ENCODE measurements at regions of chr10 and their contacts with region 1.

Region 1: DNA sequence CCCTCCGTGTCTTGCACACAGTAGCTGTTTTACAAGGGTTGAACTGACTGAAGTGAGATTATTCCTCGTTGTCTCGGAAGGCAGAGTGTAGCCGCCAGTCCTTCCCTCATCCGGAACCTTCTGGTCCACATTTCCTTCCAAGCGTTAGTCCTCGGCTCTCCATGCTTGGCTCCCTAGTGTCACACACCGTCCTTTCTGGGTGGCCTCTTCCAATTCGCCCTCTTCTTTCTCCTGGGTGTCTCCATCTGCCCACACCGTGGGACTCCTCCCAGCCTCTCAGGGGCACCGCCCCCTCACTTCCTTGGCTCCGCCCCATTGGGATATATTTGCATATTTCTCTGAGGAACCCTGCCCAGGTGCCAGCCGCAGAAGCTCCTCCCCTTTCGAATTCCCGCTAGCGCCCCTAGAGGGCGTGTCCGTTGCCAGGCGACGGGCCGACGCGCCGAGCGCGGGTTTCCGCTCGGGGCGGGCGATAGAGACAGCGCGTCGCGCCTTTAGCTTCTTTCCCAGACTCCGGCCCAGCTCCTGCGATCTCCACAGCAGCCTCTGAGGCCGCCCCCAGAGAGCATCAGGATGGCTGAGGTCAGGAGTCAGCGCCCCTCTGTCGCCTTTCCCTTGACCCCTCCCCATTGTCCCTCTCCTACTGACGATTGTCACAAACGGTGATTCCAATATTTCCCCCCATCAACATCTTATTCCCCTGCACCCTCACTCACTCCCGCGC is at the start of gene CFAP58:
- DNase-seq: peak; percentile 95
- ATAC-seq: peak; percentile 87
- H3K4me3 ChIP-seq: peak within 1 kb of the TSS; percentile 46 to 66 (median 51)
- H3K4me3 Mint-ChIP-seq: peak within 1 kb of the TSS; percentile 52
- H3K27ac ChIP-seq: peak within 1 kb of the TSS; percentile 20 to 23
- H3K27ac Mint-ChIP-seq: peak within 1 kb of the TSS; percentile 64
- H3K4me1 ChIP-seq: peaks cover 32 to 43% of the 10 kb centered on the region in 2 donors
- H3K4me1 Mint-ChIP-seq: peaks cover 19% of the 10 kb centered on the region
- H3K27me3 ChIP-seq: peaks cover 0 to 5% (median 0%) of the 10 kb centered on the region in 4 experiments
- H3K27me3 Mint-ChIP-seq: no peaks in the 10 kb centered on the region
- CTCF ChIP-seq: peak; percentile 79
- total RNA-seq, gene CFAP58: not detected in 2 replicates

Region 2: DNA sequence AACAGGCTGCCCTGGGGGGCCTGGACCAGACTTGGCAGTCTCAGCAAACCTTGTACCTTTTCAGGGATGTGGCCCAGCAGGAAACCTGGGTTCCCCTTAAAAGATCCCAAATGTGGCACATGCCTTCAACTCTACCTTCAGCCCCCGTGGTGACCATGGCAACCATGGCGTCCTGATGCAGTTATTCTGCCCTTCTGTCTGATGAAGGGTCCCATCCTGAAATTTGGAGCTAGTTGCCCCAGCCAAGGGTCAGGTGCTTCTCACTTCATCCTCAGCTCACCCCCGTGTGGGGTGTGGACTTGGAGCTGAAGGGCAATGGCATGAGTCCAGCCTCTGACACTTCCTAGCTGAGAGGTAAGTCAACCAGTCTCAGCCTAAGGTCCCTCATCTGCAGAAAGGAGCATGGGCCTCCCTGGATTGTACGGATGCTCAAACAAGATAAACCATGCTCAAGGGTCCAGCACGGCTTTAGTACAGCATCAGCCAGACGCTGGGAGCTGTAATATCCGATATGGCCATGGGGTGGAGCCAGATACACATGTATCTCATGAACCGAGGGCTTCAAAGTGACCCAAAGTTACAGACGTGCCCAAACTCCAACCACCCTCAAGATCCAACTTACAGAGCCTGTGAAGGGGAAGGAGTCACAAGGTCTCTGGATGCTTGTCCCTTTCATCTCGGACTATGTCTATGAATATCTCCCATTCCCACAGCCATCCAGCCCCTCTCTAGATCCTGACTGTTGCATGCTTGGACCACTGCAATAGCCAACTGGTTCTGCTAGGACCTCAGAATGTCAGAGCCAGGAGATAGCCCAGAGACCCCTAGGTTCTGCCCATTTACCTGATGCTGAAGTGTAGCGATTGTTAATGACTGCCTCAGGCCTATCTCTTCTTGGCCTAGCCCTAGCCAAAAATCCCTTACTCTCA is 640.7 kb before region 1 on chr10:
- CTCF ChIA-PET with region 1: no interaction called
- POLR2A ChIA-PET with region 1: no interaction called
- intact Hi-C with region 1: loop called (anchors 5 kb)
- DNase-seq: peak; percentile 84
- ATAC-seq: peak; percentile 92
- H3K4me3 ChIP-seq: no peak overlapping the region
- H3K4me3 Mint-ChIP-seq: no peak overlapping the region
- H3K27ac ChIP-seq: no peak overlapping the region
- H3K27ac Mint-ChIP-seq: no peak overlapping the region
- H3K4me1 ChIP-seq: no peaks in the 10 kb centered on the region
- H3K4me1 Mint-ChIP-seq: no peaks in the 10 kb centered on the region
- H3K27me3 ChIP-seq: no peaks in the 10 kb centered on the region
- H3K27me3 Mint-ChIP-seq: peaks cover 6% of the 10 kb centered on the region
- CTCF ChIP-seq: peak; percentile 94

Region 3: GRCh38 chr10:104274762-104275721 is 78.4 kb before region 1 on chr10:
- CTCF ChIA-PET with region 1: interaction called, 64 read pairs
- POLR2A ChIA-PET with region 1: no interaction called
- intact Hi-C with region 1: no loop called
- DNase-seq: peak; percentile 64
- ATAC-seq: peak; percentile 71
- H3K4me3 ChIP-seq: no peak overlapping the region
- H3K4me3 Mint-ChIP-seq: no peak overlapping the region
- H3K27ac ChIP-seq: no peak overlapping the region
- H3K27ac Mint-ChIP-seq: no peak overlapping the region
- H3K4me1 ChIP-seq: peaks cover 8 to 9% of the 10 kb centered on the region in 2 donors
- H3K4me1 Mint-ChIP-seq: peaks cover 4% of the 10 kb centered on the region
- H3K27me3 ChIP-seq: peaks cover 0 to 23% (median 14%) of the 10 kb centered on the region in 4 experiments
- H3K27me3 Mint-ChIP-seq: peaks cover 23% of the 10 kb centered on the region
- CTCF ChIP-seq: peak; percentile 86

Region 4: DNA sequence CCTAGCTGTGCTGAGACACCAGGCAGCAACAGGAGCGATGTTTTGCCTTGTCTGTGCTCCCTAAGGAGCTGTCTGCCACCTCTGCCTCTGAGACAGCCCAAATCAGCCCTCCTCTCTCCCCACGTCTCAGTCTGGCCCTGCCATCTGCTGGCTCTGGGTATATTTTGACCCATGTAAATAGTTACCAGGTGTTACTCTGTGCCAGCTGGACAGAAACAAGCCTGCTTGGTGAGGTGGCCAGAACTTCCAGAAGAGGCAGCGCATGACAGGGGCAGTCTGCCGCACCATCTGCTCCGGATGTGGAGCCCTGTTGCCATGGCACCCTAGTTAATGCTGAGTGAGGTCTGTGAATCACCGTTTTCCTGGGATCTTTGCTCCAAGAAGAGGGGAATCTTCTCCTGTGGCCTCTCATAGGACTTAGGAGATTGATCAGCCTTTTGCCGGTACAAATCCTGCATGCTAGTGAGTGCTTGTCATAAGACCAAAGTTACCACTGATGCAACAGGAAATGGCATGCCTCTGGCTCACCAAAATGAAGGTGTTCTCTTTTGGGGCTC is 52.7 kb before region 1 on chr10:
- CTCF ChIA-PET with region 1: interaction called, 594 read pairs
- POLR2A ChIA-PET with region 1: interaction called, 8 read pairs
- intact Hi-C with region 1: loop called (anchors 1 kb)
- DNase-seq: no peak
- ATAC-seq: no peak
- H3K4me3 ChIP-seq: no peak overlapping the region
- H3K4me3 Mint-ChIP-seq: no peak overlapping the region
- H3K27ac ChIP-seq: no peak overlapping the region
- H3K27ac Mint-ChIP-seq: no peak overlapping the region
- H3K4me1 ChIP-seq: peaks cover 1 to 3% of the 10 kb centered on the region in 2 donors
- H3K4me1 Mint-ChIP-seq: peaks cover 3% of the 10 kb centered on the region
- H3K27me3 ChIP-seq: peaks cover 0 to 14% (median 0%) of the 10 kb centered on the region in 4 experiments
- H3K27me3 Mint-ChIP-seq: peaks cover 24% of the 10 kb centered on the region
- CTCF ChIP-seq: no peak

Region 5: GRCh38 chr10:104322416-104322782 is 31.1 kb before region 1 on chr10:
- CTCF ChIA-PET with region 1: interaction called, 594 read pairs
- POLR2A ChIA-PET with region 1: no interaction called
- intact Hi-C with region 1: no loop called
- DNase-seq: peak; percentile 41
- ATAC-seq: peak; percentile 48
- H3K4me3 ChIP-seq: peak overlapping the region in 1 of 5 experiments; percentile 30
- H3K4me3 Mint-ChIP-seq: peak overlapping the region; percentile 58
- H3K27ac ChIP-seq: peak overlapping the region; percentile 46 to 67
- H3K27ac Mint-ChIP-seq: peak overlapping the region; percentile 80
- H3K4me1 ChIP-seq: peaks cover 94 to 98% of the 10 kb centered on the region in 2 donors
- H3K4me1 Mint-ChIP-seq: peaks cover 93% of the 10 kb centered on the region
- H3K27me3 ChIP-seq: no peaks in the 10 kb centered on the region
- H3K27me3 Mint-ChIP-seq: no peaks in the 10 kb centered on the region
- CTCF ChIP-seq: no peak

Region 6: GRCh38 chr10:104337974-104338735 is 15.3 kb before region 1 on chr10 and contains the start of gene ITPRIP:
- CTCF ChIA-PET with region 1: interaction called, 111 read pairs
- POLR2A ChIA-PET with region 1: interaction called, 11 read pairs
- intact Hi-C with region 1: loop called (anchors 1 kb)
- DNase-seq: peak; percentile 87
- ATAC-seq: peak; percentile 75
- H3K4me3 ChIP-seq: peak within 1 kb of the TSS; percentile 94 to 98 (median 97)
- H3K4me3 Mint-ChIP-seq: peak within 1 kb of the TSS; percentile 100
- H3K27ac ChIP-seq: peak within 1 kb of the TSS; percentile 80 to 83
- H3K27ac Mint-ChIP-seq: peak within 1 kb of the TSS; percentile 100
- H3K4me1 ChIP-seq: peaks cover 34 to 54% of the 10 kb centered on the region in 2 donors
- H3K4me1 Mint-ChIP-seq: peaks cover 53% of the 10 kb centered on the region
- H3K27me3 ChIP-seq: no peaks in the 10 kb centered on the region
- H3K27me3 Mint-ChIP-seq: no peaks in the 10 kb centered on the region
- CTCF ChIP-seq: no peak
- total RNA-seq, gene ITPRIP: 21.3 and 22.5 TPM in 2 replicates

Region 7: DNA sequence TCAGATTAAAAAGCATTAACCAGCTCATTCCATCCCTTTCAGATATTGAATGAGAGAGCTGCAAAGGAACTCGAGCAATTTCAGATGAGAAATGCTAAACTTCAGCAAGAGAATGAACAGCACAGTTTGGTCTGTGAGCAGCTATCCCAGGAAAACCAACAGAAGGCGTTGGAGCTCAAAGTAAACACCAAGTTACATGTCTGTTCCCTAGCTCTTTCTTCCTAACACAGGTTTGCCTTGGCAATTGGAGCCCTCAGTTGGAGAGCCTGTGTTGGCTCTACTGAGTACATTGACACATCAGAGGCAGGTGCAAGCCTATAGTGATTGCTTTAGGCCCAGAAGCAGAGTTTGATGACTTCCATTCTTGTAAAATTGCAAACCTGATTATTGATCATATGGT is 14.9 kb after region 1 on chr10:
- CTCF ChIA-PET with region 1: no interaction called
- POLR2A ChIA-PET with region 1: no interaction called
- intact Hi-C with region 1: no loop called
- DNase-seq: no peak
- ATAC-seq: no peak
- H3K4me3 ChIP-seq: no peak overlapping the region
- H3K4me3 Mint-ChIP-seq: no peak overlapping the region
- H3K27ac ChIP-seq: no peak overlapping the region
- H3K27ac Mint-ChIP-seq: no peak overlapping the region
- H3K4me1 ChIP-seq: no peaks in the 10 kb centered on the region
- H3K4me1 Mint-ChIP-seq: no peaks in the 10 kb centered on the region
- H3K27me3 ChIP-seq: peaks cover 0 to 21% (median 8%) of the 10 kb centered on the region in 4 experiments
- H3K27me3 Mint-ChIP-seq: peaks cover 45% of the 10 kb centered on the region
- CTCF ChIP-seq: no peak

Measured in B cell (primary cell).